Activated CD8-positive, alpha-beta T cell treated with anti-CD3 and anti-CD28 coated beads, Interleukin-2, amount 10 ng/mL, durations not matched to agents 7 days and 5 days (primary cell): ENCODE measurements at regions of chr17 and their contacts with region 1.

Region 1: DNA sequence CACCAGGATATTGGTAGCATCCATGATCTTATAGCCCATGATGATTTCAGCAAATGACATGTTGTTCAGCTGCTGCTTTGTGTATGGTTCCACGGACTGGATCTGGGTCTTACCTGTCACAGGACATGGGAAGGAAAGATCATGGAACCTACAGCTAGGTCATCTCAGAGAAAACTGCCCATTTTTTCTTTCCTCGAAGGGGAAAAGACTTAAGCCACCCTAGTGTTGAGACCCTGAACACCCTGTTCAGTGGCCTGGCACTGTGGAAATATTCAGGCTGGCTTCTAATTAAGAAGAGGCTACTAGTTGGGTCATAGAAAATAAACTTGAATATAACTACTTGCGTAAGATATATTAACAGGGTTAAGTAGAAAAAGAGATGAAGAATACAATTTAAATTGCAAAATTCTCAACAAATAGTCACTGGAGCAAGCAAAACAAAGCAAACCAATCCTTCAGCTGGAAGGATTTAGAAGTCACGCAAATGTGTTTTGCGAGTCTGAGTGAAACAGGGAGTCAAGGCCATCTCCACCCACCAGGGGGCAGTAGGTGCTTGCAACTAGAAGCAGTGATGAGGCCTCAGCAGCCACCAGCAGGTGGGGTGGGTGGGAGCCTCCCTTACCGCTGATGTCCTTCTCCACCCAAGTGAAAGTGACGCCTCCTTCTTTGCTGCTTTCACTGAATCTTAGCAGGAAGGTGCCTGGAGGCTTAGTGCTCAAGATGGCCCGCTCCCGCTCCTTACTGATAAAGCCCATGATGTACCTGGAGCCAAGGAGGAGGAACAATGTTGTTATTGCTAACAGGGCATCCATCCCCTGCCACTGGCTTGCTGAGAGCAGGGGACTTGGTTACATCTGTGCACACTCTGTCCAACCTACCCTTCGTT is 34.3 kb downstream of the STAT5A start:
- DNase-seq: peak; percentile 98
- ATAC-seq: peak; percentile 93
- H3K4me3 Mint-ChIP-seq: no peak overlapping the region
- H3K27ac Mint-ChIP-seq: peak overlapping the region; percentile 75
- H3K4me1 Mint-ChIP-seq: peaks cover 45% of the 10 kb centered on the region
- H3K27me3 Mint-ChIP-seq: no peaks in the 10 kb centered on the region

Region 2: DNA sequence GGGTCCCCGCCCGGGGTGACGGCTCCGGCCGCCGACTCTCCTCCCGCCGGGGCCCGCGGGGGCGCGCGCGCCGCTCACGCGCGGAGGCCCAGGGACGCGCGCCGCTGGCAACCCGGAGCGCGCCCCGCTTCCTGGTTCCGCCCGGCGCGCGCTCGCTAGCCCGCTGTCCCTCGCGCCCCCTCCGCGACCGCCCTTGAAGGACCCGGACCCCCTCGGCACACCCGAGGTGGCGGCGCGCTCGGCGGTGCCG is 46.3 kb before region 1 on chr17 and contains the start of gene STAT5B:
- CTCF ChIA-PET with region 1: no interaction called
- POLR2A ChIA-PET with region 1: no interaction called
- DNase-seq: peak; percentile 74
- ATAC-seq: peak; percentile 69
- H3K4me3 Mint-ChIP-seq: peak within 1 kb of the TSS; percentile 93
- H3K27ac Mint-ChIP-seq: peak within 1 kb of the TSS; percentile 86
- H3K4me1 Mint-ChIP-seq: peaks cover 46% of the 10 kb centered on the region
- H3K27me3 Mint-ChIP-seq: no peaks in the 10 kb centered on the region
- total RNA-seq, gene STAT5B: 92.7 to 94.4 TPM

Region 3: GRCh38 chr17:42312285-42313130 is 10.1 kb before region 1 on chr17:
- CTCF ChIA-PET with region 1: interaction called, 41 read pairs
- POLR2A ChIA-PET with region 1: interaction called, 3 read pairs
- DNase-seq: peak; percentile 85
- ATAC-seq: peak; percentile 77
- H3K4me3 Mint-ChIP-seq: peak overlapping the region; percentile 39
- H3K27ac Mint-ChIP-seq: peak overlapping the region; percentile 67
- H3K4me1 Mint-ChIP-seq: peaks cover 60% of the 10 kb centered on the region
- H3K27me3 Mint-ChIP-seq: no peaks in the 10 kb centered on the region

Region 4: GRCh38 chr17:42337442-42337841 is 14.8 kb after region 1 on chr17:
- CTCF ChIA-PET with region 1: interaction called, 27 read pairs
- POLR2A ChIA-PET with region 1: interaction called, 5 read pairs
- DNase-seq: peak; percentile 87
- ATAC-seq: peak; percentile 83
- H3K4me3 Mint-ChIP-seq: peak overlapping the region; percentile 51
- H3K27ac Mint-ChIP-seq: peak overlapping the region; percentile 81
- H3K4me1 Mint-ChIP-seq: peaks cover 67% of the 10 kb centered on the region
- H3K27me3 Mint-ChIP-seq: no peaks in the 10 kb centered on the region

Region 5: DNA sequence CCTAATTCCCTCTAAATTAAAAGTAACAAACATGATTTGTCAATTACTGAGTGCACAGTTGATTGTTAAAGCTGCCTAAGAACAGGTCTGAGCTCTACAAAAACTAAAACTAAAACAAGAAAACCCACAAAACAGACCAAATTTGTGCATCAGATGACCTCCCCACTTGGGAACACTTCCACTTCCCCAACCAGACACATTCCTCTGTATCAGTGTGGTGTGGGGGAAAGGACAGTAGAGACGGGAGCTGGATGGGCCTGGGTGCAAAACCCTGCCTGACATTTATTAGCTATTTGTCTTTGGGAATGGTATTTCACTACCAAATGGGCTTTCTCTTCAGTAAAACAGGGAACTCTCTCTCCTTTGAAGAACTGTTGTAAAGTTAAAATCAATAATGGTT is 35.8 kb after region 1 on chr17:
- CTCF ChIA-PET with region 1: interaction called, 12 read pairs
- POLR2A ChIA-PET with region 1: interaction called, 3 read pairs
- DNase-seq: no peak
- ATAC-seq: no peak
- H3K4me3 Mint-ChIP-seq: no peak overlapping the region
- H3K27ac Mint-ChIP-seq: peak overlapping the region; percentile 37
- H3K4me1 Mint-ChIP-seq: peaks cover 56% of the 10 kb centered on the region
- H3K27me3 Mint-ChIP-seq: no peaks in the 10 kb centered on the region

Region 6: GRCh38 chr17:42388381-42389134 is 65.9 kb after region 1 on chr17 and contains the start of gene STAT3:
- CTCF ChIA-PET with region 1: interaction called, 70 read pairs
- POLR2A ChIA-PET with region 1: interaction called, 8 read pairs
- DNase-seq: peak; percentile 100
- ATAC-seq: peak; percentile 94
- H3K4me3 Mint-ChIP-seq: peak within 1 kb of the TSS; percentile 89
- H3K27ac Mint-ChIP-seq: peak within 1 kb of the TSS; percentile 99
- H3K4me1 Mint-ChIP-seq: peaks cover 51% of the 10 kb centered on the region
- H3K27me3 Mint-ChIP-seq: no peaks in the 10 kb centered on the region
- total RNA-seq, gene STAT3: 94.7 to 101 TPM

Region 7: DNA sequence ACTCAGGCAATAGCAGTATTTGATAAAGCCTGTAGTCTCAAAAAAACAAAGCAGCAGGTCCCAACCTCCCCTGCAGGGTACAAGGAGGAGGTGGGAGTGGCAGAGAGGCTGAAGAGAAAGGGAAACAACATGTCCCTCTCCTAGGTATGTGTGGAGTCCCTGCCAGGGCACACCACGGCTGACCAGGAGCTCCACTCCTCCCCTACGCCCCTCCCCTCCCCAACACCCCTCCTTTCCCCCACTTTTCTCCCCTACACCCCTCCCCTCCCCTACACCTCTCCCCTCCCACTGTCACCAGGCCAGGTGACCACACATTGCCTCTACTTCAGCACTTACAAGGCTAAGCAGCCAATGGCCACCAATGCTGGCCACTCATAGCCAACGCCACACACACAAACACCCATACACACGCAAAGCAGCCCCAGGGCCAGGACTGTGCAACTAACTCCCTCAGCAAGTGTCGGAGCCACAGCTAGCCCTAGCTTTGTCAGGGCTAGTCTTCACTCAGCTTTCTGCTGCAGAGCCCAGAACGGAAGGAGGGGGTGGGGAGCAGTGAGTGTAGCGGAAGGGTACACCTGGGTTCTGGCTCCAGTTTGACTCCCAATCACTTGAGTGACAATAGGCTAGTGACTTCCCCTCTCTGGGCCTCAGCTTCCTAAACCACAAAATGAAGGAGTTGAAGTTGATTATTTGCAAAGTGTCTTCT is 92.2 kb after region 1 on chr17:
- CTCF ChIA-PET with region 1: interaction called, 666 read pairs
- POLR2A ChIA-PET with region 1: no interaction called
- DNase-seq: peak; percentile 62
- ATAC-seq: peak; percentile 69
- H3K4me3 Mint-ChIP-seq: no peak overlapping the region
- H3K27ac Mint-ChIP-seq: peak overlapping the region; percentile 53
- H3K4me1 Mint-ChIP-seq: peaks cover 12% of the 10 kb centered on the region
- H3K27me3 Mint-ChIP-seq: peaks cover 10% of the 10 kb centered on the region